G401 (cell line): ENCODE measurements at regions of chr16 and their contacts with region 1.

Region 1: DNA sequence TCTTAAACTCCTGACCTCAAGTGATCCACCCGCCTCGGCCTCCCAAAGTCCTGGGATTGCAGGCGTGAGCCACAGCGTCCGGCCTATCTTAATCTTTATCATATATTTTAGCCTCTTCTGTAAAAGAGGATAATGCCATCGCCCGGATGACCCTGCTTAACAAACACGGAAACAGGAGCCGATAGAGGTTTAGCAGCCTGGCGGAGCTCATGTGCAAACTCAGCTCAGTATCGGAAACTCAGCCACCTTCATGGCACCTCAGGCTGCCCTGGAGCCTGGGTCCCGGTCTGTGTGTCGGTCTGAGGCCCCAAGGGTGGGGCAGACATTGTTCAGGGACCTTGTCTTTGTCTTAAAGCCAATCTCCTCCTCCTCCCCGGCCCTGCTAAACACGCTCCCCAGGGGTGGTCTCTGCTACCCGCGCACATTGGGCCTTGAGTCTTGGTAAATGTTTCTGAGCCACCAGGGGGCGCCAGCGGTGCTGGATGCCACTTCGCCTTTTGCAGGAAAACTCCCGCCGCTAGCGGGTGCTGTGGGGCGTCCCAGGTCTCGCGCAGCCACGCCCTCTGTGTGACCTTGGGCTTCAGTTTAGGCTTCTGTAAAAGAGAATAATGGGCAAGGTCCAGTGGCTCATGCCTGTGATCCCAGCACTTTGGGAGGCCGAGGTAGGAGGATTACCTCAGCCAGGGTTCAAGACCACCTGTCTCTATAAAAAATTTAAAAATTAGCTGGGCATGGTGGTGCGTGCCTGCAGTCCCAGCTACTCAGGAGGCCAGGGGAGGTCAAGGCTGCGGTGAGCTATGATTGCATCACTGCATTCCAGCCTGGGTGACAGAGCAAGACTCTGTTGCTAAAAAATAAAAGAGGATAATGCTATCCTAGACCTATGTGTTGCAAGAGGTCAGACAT is 2.7 kb downstream of the CETP start:
- DNase-seq: peak; percentile 26

Region 2: GRCh38 chr16:56866943-56867830 is 97.3 kb before region 1 on chr16:
- in situ Hi-C with region 1: loop called (anchors 25 kb)
- DNase-seq: peak; percentile 50

Region 3: GRCh38 chr16:57000271-57001025 is 36.0 kb after region 1 on chr16:
- in situ Hi-C with region 1: no loop called
- DNase-seq: no peak

Region 4: GRCh38 chr16:57061084-57061905 is 96.8 kb after region 1 on chr16:
- in situ Hi-C with region 1: loop called (anchors 25 kb)
- DNase-seq: no peak

Region 5: GRCh38 chr16:57084257-57084770 is 119.8 kb after region 1 on chr16:
- in situ Hi-C with region 1: no loop called
- DNase-seq: peak; percentile 55